HepG2 (cell line): ENCODE measurements at regions of chr20 and their contacts with region 1.

Region 1: GRCh38 chr20:12970372-12970821 is 38.4 kb upstream of the SPTLC3 start:
- DNase-seq: peak; percentile 74
- ATAC-seq: peak; percentile 80
- H3K4me3 ChIP-seq: no peak overlapping the region
- H3K27ac ChIP-seq: no peak overlapping the region
- H3K4me1 ChIP-seq: peaks cover 30% of the 10 kb centered on the region
- H3K27me3 ChIP-seq: no peaks in the 10 kb centered on the region
- CTCF ChIP-seq: peak; percentile 91
- EP300 ChIP-seq: no peak
- POLR2A ChIP-seq: no peak
- RAD21 ChIP-seq: peak; percentile 95

Region 2: GRCh38 chr20:12570371-12570770 is 400.0 kb before region 1 on chr20:
- CTCF ChIA-PET with region 1: no interaction called
- POLR2A ChIA-PET with region 1: no interaction called
- in situ Hi-C with region 1: no loop called
- intact Hi-C with region 1: loop called (anchors 2 kb)
- DNase-seq: peak; percentile 76
- ATAC-seq: peak; percentile 100
- H3K4me3 ChIP-seq: no peak overlapping the region
- H3K27ac ChIP-seq: no peak overlapping the region
- H3K4me1 ChIP-seq: no peaks in the 10 kb centered on the region
- H3K27me3 ChIP-seq: no peaks in the 10 kb centered on the region
- CTCF ChIP-seq: peak; percentile 77
- EP300 ChIP-seq: no peak
- POLR2A ChIP-seq: no peak
- RAD21 ChIP-seq: peak; percentile 38; the same call in 1 of the 2 replicates

Region 3: GRCh38 chr20:13105864-13106457 is 135.6 kb after region 1 on chr20:
- CTCF ChIA-PET with region 1: interaction called, 164 read pairs
- POLR2A ChIA-PET with region 1: no interaction called
- in situ Hi-C with region 1: loop called (anchors 5 kb)
- intact Hi-C with region 1: loop called (anchors 1 kb)
- DNase-seq: peak; percentile 62
- ATAC-seq: no peak
- H3K4me3 ChIP-seq: no peak overlapping the region
- H3K27ac ChIP-seq: peak overlapping the region; percentile 28
- H3K4me1 ChIP-seq: peaks cover 36% of the 10 kb centered on the region
- H3K27me3 ChIP-seq: no peaks in the 10 kb centered on the region
- CTCF ChIP-seq: peak; percentile 79
- EP300 ChIP-seq: no peak
- POLR2A ChIP-seq: no peak
- RAD21 ChIP-seq: peak; percentile 88

Region 4: DNA sequence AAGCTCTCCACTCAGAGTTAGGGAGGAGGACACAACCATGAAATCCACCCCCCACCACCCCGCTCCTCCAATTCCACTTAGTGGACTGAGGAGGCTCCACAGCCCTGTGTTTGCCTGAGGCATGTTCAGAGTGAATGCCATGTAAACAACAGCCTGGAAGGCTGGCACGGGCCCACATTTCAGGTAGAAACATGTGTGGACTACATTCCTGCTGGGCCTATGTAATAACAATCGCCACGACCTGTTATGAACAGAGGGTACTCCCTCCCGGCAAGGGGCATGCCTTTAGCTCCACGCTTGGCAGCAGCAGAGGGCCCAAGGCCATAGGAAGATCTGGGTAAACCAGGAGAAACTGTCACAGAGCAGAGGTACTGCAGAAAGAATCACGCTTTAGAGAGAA is 316.2 kb after region 1 on chr20:
- CTCF ChIA-PET with region 1: no interaction called
- POLR2A ChIA-PET with region 1: no interaction called
- in situ Hi-C with region 1: loop called (anchors 25 kb)
- intact Hi-C with region 1: no loop called
- DNase-seq: no peak
- ATAC-seq: 0 out of 3 replicates have a peak, but pooled peaks have one; percentile 19
- H3K4me3 ChIP-seq: no peak overlapping the region
- H3K27ac ChIP-seq: no peak overlapping the region
- H3K4me1 ChIP-seq: peaks cover 10% of the 10 kb centered on the region
- H3K27me3 ChIP-seq: no peaks in the 10 kb centered on the region; a peak in 1 of 5 replicates
- CTCF ChIP-seq: no peak
- EP300 ChIP-seq: no peak
- POLR2A ChIP-seq: no peak
- RAD21 ChIP-seq: no peak

Region 5: GRCh38 chr20:13546497-13547131 is 576.2 kb after region 1 on chr20:
- CTCF ChIA-PET with region 1: no interaction called
- POLR2A ChIA-PET with region 1: no interaction called
- in situ Hi-C with region 1: no loop called
- intact Hi-C with region 1: loop called (anchors 1 kb)
- DNase-seq: peak; percentile 83
- ATAC-seq: peak; percentile 94
- H3K4me3 ChIP-seq: no peak overlapping the region
- H3K27ac ChIP-seq: no peak overlapping the region
- H3K4me1 ChIP-seq: no peaks in the 10 kb centered on the region
- H3K27me3 ChIP-seq: no peaks in the 10 kb centered on the region
- CTCF ChIP-seq: peak; percentile 94
- EP300 ChIP-seq: no peak
- POLR2A ChIP-seq: no peak
- RAD21 ChIP-seq: peak; percentile 97